ENCODE measurements at regions of chr12 and their contacts with region 1.

Region 1: GRCh38 chr12:93677195-93678064 is at the start of gene CRADD:
- DNase-seq: peak; percentile 85
- H3K4me3 Mint-ChIP-seq: peak within 1 kb of the TSS; percentile 94
- H3K27ac Mint-ChIP-seq: peak within 1 kb of the TSS; percentile 99
- H3K4me1 Mint-ChIP-seq: peaks cover 30% of the 10 kb centered on the region
- H3K27me3 Mint-ChIP-seq: peaks cover 9% of the 10 kb centered on the region
- total RNA-seq, gene CRADD: 10.2 and 10.7 TPM in 2 replicates

Region 2: GRCh38 chr12:93441617-93442410 is 235.6 kb before region 1 on chr12 and contains the start of gene UBE2N:
- intact Hi-C with region 1: loop called (anchors 10 kb)
- DNase-seq: peak; percentile 94
- H3K4me3 Mint-ChIP-seq: peak within 1 kb of the TSS; percentile 98
- H3K27ac Mint-ChIP-seq: peak within 1 kb of the TSS; percentile 95
- H3K4me1 Mint-ChIP-seq: peaks cover 38% of the 10 kb centered on the region
- H3K27me3 Mint-ChIP-seq: no peaks in the 10 kb centered on the region
- total RNA-seq, gene UBE2N: 258 and 261 TPM in 2 replicates

Region 3: GRCh38 chr12:93742110-93742934 is 64.9 kb after region 1 on chr12:
- intact Hi-C with region 1: loop called (anchors 1 kb)
- DNase-seq: peak; percentile 32
- H3K4me3 Mint-ChIP-seq: peak overlapping the region; percentile 82
- H3K27ac Mint-ChIP-seq: peak overlapping the region; percentile 79
- H3K4me1 Mint-ChIP-seq: peaks cover 30% of the 10 kb centered on the region
- H3K27me3 Mint-ChIP-seq: peaks cover 1% of the 10 kb centered on the region

Region 4: GRCh38 chr12:93847517-93848474 is 170.4 kb after region 1 on chr12:
- intact Hi-C with region 1: loop called (anchors 2 kb)
- DNase-seq: no peak
- H3K4me3 Mint-ChIP-seq: peak overlapping the region; percentile 40
- H3K27ac Mint-ChIP-seq: peak overlapping the region; percentile 81
- H3K4me1 Mint-ChIP-seq: peaks cover 54% of the 10 kb centered on the region
- H3K27me3 Mint-ChIP-seq: no peaks in the 10 kb centered on the region

Region 5: GRCh38 chr12:93979189-93979588 is 301.8 kb after region 1 on chr12:
- intact Hi-C with region 1: loop called (anchors 10 kb)
- DNase-seq: peak; percentile 13
- H3K4me3 Mint-ChIP-seq: no peak overlapping the region
- H3K27ac Mint-ChIP-seq: no peak overlapping the region
- H3K4me1 Mint-ChIP-seq: peaks cover 34% of the 10 kb centered on the region
- H3K27me3 Mint-ChIP-seq: peaks cover 8% of the 10 kb centered on the region

Measured in activated T-helper 2 cell treated with anti-CD3 and anti-CD28 coated beads, Interferon-gamma antibody, Interleukin-2, Interleukin-4, amounts not matched to agents 10 μg/mL and 5 μg/mL and 100 μg/mL, durations not matched to agents 14 hours and 24 hours and 36 hours (primary cell).